Activated CD8-positive, alpha-beta memory T cell treated with anti-CD3 and anti-CD28 coated beads, Interleukin-2, amount 10 ng/mL, durations not matched to agents 7 days and 5 days (primary cell): ENCODE measurements at regions of chr3 and their contacts with region 1.

Region 1: DNA sequence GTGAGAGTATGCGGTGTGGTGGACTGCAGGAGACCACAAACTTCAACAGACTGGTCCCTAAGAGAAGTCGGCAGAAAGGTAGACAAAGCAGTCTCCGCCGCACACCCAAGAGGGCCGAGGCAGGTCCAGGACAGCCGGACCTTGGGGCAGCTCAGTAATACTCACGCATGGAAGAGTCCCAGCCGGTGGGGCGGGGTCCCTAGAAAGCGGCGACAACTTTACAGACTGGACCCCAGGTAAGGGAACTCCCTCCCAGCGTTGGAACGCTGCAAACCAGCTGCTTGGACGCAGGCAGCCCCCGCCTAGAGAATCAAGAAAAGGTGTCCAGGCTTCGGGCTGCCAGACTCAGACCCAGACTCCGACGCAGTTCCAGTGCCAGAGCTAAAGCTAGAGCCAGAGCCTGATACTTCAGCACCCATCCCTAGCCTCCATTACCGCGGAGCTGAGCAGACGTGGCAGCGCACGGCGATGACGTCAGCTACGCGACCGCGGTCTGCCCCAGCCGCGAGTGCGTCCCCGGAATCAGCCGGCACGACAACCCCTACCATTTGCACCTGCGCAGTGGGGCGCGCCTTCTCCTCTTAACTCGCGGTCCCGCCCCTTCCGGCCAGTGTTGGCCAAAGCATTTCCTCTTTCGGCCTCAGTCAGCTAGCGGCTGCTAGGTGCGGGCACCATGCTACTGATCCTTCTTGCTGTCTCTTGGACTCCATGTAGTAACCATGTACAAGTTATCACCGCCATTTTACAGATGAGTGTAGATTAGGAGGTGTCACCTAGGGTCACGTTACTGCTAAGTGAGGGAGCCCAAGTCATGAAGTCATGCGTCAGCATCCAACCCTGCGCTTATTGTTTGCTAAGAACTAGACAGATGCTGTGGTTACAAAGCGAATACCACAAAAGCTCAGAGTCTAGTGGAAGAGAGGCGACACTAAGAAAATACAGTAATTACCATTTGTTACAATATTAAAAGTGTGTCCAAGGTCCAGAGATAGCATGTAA is at the start of gene TMEM39A:
- DNase-seq: peak; percentile 99
- ATAC-seq: peak; percentile 90
- H3K4me3 Mint-ChIP-seq: peak within 1 kb of the TSS; percentile 89
- H3K27ac Mint-ChIP-seq: peak within 1 kb of the TSS; percentile 98
- H3K4me1 Mint-ChIP-seq: peaks cover 53% of the 10 kb centered on the region
- H3K27me3 Mint-ChIP-seq: peaks cover 2% of the 10 kb centered on the region
- total RNA-seq, gene TMEM39A: 35.2 to 42.6 TPM

Region 2: DNA sequence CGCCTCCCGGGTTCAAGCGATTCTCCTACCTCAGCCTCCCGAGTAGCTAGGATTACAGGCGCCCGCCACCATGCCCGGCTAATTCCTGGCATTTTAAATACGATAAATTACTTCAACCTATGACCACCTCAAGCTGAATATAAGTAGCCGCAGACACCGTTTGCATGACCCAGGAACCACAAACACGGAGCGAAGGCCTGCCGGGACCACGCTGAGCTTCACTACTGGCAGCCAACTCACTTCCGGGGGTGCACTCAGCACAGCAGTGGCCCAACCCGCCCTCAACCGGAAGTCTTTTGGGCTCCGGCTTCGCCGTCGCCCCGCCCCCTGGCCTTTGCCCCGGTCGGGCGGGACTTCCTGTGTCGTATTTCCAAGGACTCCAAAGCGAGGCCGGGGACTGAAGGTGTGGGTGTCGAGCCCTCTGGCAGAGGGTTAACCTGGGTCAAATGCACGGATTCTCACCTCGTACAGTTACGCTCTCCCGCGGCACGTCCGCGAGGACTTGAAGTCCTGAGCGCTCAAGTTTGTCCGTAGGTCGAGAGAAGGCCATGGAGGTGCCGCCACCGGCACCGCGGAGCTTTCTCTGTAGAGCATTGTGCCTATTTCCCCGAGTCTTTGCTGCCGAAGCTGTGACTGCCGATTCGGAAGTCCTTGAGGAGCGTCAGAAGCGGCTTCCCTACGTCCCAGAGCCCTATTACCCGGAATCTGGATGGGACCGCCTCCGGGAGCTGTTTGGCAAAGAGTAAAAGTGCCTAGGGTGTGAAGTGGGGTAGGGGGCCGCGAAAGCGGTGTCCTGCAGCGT is 34.9 kb after region 1 on chr3 and contains the start of gene TIMMDC1:
- CTCF ChIA-PET with region 1: interaction called, 12 read pairs
- DNase-seq: peak; percentile 98
- ATAC-seq: peak; percentile 99
- H3K4me3 Mint-ChIP-seq: peak within 1 kb of the TSS; percentile 97
- H3K27ac Mint-ChIP-seq: peak within 1 kb of the TSS; percentile 98
- H3K4me1 Mint-ChIP-seq: peaks cover 30% of the 10 kb centered on the region
- H3K27me3 Mint-ChIP-seq: no peaks in the 10 kb centered on the region
- total RNA-seq, gene TIMMDC1: 69.8 to 82.8 TPM

Region 3: GRCh38 chr3:119681279-119681678 is 217.8 kb after region 1 on chr3:
- CTCF ChIA-PET with region 1: interaction called, 12 read pairs
- DNase-seq: no peak
- ATAC-seq: no peak
- H3K4me3 Mint-ChIP-seq: no peak overlapping the region
- H3K27ac Mint-ChIP-seq: no peak overlapping the region
- H3K4me1 Mint-ChIP-seq: peaks cover 20% of the 10 kb centered on the region
- H3K27me3 Mint-ChIP-seq: no peaks in the 10 kb centered on the region